ENCODE measurements at regions of chr19 and their contacts with region 1.

Region 1: DNA sequence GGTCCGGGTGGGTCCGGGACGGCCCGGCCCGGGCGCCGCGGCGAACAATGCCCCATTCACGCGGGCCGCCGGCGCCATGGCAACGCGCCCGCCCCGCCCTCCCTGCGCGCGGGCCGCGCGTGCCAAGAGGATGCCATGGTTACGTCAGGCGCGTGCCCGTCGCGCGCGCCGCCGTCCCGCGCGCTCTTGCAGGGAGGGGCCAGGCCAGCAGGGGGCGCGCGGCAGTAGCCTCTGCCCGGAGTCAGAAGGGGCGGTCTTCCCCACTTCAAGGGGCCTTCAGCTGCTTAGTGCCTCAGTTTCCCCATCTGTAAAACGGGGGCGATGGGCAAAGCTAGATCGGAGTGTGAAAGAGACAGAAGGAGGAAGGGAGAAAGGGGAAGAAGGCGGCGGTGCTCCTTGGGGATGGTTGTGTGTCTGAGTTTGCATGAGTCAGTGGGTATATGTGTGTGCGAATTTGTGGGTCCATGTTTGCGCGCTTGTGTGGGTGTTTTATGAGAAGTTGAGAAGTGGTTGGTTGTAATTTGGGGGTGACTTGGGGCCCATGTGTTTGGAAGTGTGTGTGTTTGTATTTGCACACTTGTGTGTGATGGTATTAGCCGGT is 11.6 kb upstream of the NFIX start:
- DNase-seq: peak; percentile 64 to 89
- H3K4me3 ChIP-seq: peak overlapping the region; percentile 33 to 43
- H3K27ac ChIP-seq: peak overlapping the region; percentile 36 to 50
- H3K4me1 ChIP-seq: peaks cover 0 to 30% (median 13%) of the 10 kb centered on the region in 4 donors
- H3K27me3 ChIP-seq: no peaks in the 10 kb centered on the region
- CTCF ChIP-seq: peak; percentile 93 to 99

Region 2: GRCh38 chr19:13029893-13030292 is 46.3 kb after region 1 on chr19:
- intact Hi-C with region 1: loop called (anchors 5 kb)
- DNase-seq: peak in 1 of 2 donors; percentile 73
- H3K4me3 ChIP-seq: no peak overlapping the region
- H3K27ac ChIP-seq: peak overlapping the region; percentile 88 to 99
- H3K4me1 ChIP-seq: peaks cover 7 to 100% (median 91%) of the 10 kb centered on the region in 4 donors
- H3K27me3 ChIP-seq: no peaks in the 10 kb centered on the region
- CTCF ChIP-seq: peak; percentile 28 to 39

Region 3: GRCh38 chr19:13093407-13094105 is 109.9 kb after region 1 on chr19:
- intact Hi-C with region 1: loop called (anchors 2 kb)
- DNase-seq: peak; percentile 78 to 92
- H3K4me3 ChIP-seq: no peak overlapping the region
- H3K27ac ChIP-seq: peak overlapping the region; percentile 87 to 94
- H3K4me1 ChIP-seq: peaks cover 11 to 88% (median 71%) of the 10 kb centered on the region in 4 donors
- H3K27me3 ChIP-seq: no peaks in the 10 kb centered on the region
- CTCF ChIP-seq: peak; percentile 93 to 98

Region 4: DNA sequence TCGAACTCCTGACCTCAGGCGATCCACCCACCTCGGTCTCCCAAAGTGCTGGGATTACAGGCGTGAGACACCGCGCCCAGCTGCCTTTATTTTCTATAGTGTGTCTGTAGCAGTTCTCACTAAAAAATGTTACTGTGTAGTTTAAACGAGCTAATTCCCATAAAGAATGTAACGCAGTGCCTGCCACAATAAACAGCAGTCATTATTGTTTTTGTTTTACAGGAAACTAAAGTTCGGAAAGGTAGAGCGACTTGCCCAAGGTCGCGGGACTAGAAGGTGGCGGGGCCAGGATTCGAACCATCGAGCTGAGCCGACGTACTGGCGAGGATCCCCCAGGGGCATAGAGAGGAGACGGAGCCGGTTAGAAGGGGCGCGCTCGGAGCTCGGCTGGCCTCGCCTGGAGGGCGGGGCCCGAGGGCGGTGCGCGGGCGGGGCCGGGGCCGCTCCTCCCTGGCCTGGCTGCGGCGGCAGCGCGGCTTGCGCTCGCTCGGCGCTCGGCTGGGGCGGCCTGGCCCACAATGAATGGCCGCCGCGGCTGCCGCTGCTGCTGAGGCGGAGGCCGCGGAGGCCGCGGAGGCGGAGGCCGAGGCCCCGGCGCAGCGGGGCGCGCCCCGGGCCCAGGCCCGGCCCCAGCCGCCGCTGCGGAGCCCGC is 134.3 kb after region 1 on chr19 and contains the start of gene NACC1:
- intact Hi-C with region 1: no loop called
- DNase-seq: peak; percentile 84 to 94
- H3K4me3 ChIP-seq: peak within 1 kb of the TSS; percentile 70 to 98
- H3K27ac ChIP-seq: peak within 1 kb of the TSS; percentile 62 to 70
- H3K4me1 ChIP-seq: peaks cover 0 to 42% (median 31%) of the 10 kb centered on the region in 4 donors
- H3K27me3 ChIP-seq: no peaks in the 10 kb centered on the region
- CTCF ChIP-seq: no peak